Heart left ventricle (tissue), 16 donors: ENCODE measurements at regions of chr22 and their contacts with region 1.

Region 1: GRCh38 chr22:35589071-35589952 is 27.8 kb downstream of the MB start:
- DNase-seq: peak in 2 of 5 donors; percentile 56 to 71
- ATAC-seq: peak in 2 of 4 donors; percentile 6 to 8
- H3K4me3 ChIP-seq: no peak overlapping the region
- H3K27ac ChIP-seq: peak overlapping the region in 11 of 12 donors; percentile 68 to 92 (median 84)
- H3K4me1 ChIP-seq: peaks cover 0 to 72% (median 35%) of the 10 kb centered on the region in 12 donors
- H3K27me3 ChIP-seq: no peaks in the 10 kb centered on the region
- CTCF ChIP-seq: no peak
- POLR2A ChIP-seq: no peak

Region 2: GRCh38 chr22:35479985-35480550 is 109.2 kb before region 1 on chr22:
- intact Hi-C with region 1: no loop called
- DNase-seq: peak in 1 of 5 donors; percentile 54
- ATAC-seq: peak in 3 of 4 donors; percentile 31 to 58 (median 34)
- H3K4me3 ChIP-seq: no peak overlapping the region
- H3K27ac ChIP-seq: peak overlapping the region in 9 of 12 donors; percentile 17 to 81 (median 43)
- H3K4me1 ChIP-seq: peaks cover 0 to 22% (median 7%) of the 10 kb centered on the region in 12 donors
- H3K27me3 ChIP-seq: peaks cover 0 to 12% (median 0%) of the 10 kb centered on the region in 9 donors
- CTCF ChIP-seq: no peak
- POLR2A ChIP-seq: no peak

Region 3: GRCh38 chr22:35524966-35525686 is 64.2 kb before region 1 on chr22:
- intact Hi-C with region 1: no loop called
- DNase-seq: peak in 2 of 5 donors; percentile 33 to 69
- ATAC-seq: peak; percentile 26 to 65 (median 37)
- H3K4me3 ChIP-seq: no peak overlapping the region
- H3K27ac ChIP-seq: peak overlapping the region in 7 of 12 donors; percentile 10 to 72 (median 44)
- H3K4me1 ChIP-seq: peaks cover 0 to 10% (median 0%) of the 10 kb centered on the region in 12 donors
- H3K27me3 ChIP-seq: peaks cover 0 to 11% (median 0%) of the 10 kb centered on the region in 9 donors
- CTCF ChIP-seq: no peak
- POLR2A ChIP-seq: no peak

Region 4: DNA sequence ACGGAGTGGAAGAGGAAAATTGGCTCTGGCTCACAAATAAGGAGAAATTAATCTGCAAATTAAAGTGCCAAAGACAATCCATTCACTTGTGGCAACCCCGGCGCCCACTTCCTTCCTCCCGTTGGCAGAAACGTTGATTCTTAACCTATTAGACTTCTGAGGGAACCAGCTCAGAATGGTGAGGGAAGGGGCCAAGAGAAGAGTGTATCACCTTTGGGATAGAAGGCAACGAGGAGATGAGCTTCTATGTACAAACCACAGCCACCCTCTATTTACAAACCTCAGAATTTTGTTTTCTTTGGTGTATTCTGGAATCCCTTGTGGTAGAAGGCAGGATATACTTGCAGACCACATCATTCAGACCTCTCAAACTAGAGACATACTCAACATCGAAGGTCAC is 26.7 kb after region 1 on chr22:
- intact Hi-C with region 1: loop called in 4 of 10 experiments (anchors 1 to 5 kb)
- DNase-seq: no peak
- ATAC-seq: no peak
- H3K4me3 ChIP-seq: peak overlapping the region; percentile 39 to 86 (median 58)
- H3K27ac ChIP-seq: peak overlapping the region; percentile 61 to 98 (median 90)
- H3K4me1 ChIP-seq: peaks cover 0 to 38% (median 14%) of the 10 kb centered on the region in 12 donors
- H3K27me3 ChIP-seq: no peaks in the 10 kb centered on the region
- CTCF ChIP-seq: no peak
- POLR2A ChIP-seq: no peak

Region 5: DNA sequence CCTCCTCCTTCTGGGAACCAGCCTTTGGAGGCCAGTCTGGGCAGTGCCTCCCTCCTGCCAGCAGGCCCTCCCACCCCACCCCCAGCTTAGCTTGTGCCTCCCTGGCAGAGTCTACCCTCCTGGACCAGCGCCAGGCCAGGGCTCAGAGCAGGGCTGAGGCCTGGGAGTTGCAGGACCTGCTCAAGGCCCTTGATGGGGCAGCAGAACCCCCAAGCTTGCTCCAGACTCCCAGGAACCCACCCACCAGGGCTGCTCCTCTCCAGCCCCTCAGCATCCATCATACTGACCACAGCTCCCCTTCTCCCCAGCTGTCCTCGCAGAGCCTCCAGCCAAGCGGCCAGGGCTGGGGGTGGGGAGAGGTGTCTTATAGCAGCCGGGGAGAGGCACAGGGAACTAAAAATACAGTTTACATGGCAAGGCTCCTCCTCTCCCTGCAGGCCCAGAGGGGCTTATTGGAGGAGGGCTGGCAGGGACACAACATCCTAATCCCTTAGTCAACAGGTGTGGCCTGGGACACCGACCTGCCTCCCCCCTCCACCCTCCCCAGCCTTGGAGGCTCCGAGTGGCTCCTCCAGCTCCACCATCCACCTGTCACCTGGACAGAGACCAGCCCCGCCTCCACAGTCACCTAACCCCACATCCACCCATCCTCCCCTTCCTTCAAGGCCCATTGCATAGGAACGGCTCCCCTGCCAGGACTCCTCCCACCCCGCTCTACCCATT is 33.0 kb after region 1 on chr22:
- intact Hi-C with region 1: loop called in 5 of 10 experiments (anchors 1 to 5 kb)
- DNase-seq: peak; percentile 66 to 86 (median 80)
- ATAC-seq: peak; percentile 49 to 63 (median 55)
- H3K4me3 ChIP-seq: peak overlapping the region in 1 of 12 donors; percentile 11
- H3K27ac ChIP-seq: peak overlapping the region; percentile 61 to 96 (median 87)
- H3K4me1 ChIP-seq: peaks cover 0 to 55% (median 23%) of the 10 kb centered on the region in 12 donors
- H3K27me3 ChIP-seq: no peaks in the 10 kb centered on the region
- CTCF ChIP-seq: peak in 1 of 12 donors; percentile 9
- POLR2A ChIP-seq: no peak

Region 6: DNA sequence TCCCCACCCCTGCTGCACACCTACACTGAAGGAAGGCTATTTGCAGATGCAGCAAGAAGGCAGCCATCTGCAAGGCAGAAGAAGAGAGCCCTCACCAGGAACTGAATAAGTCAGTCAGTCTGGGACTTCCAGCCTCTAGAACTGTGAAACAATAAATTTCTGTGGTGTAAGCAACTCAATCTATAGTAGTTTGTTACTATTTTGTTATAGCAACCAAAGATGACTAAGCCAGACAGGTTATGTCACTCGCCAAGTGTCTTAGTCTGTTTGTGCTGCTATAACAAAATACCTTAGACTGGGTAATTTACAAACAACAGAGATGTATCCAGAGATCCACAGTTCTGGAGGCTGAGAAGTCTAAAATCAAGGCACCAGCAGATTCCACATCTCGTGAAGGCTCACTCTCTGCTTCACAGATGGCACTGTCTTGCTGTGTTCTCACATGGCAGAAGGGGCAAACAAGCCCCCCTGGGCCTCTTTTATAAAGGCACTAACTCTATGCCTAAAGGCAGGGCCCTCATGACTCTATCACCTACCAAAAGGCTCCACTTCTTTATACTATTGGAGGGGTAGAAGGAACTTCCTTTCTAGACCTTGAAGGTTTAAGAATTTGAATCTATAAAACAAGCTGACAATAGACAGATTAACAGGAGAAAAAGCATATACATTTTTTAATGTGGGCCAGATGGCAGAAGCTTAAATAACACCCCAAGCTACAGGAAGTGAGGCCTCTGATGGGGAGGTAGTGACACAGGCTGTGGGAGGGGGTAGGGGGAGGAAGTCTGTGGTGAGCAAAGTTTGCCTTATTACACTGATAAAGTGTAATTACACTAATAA is 71.2 kb after region 1 on chr22:
- intact Hi-C with region 1: no loop called
- DNase-seq: no peak
- ATAC-seq: peak in 1 of 4 donors; percentile 56
- H3K4me3 ChIP-seq: no peak overlapping the region
- H3K27ac ChIP-seq: peak overlapping the region in 3 of 12 donors; percentile 27 to 82 (median 32)
- H3K4me1 ChIP-seq: peaks cover 0 to 57% (median 8%) of the 10 kb centered on the region in 12 donors
- H3K27me3 ChIP-seq: no peaks in the 10 kb centered on the region
- CTCF ChIP-seq: no peak
- POLR2A ChIP-seq: no peak